Right cardiac atrium (tissue), 5 donors: ENCODE measurements at regions of chr21 and their contacts with region 1.

Region 1: DNA sequence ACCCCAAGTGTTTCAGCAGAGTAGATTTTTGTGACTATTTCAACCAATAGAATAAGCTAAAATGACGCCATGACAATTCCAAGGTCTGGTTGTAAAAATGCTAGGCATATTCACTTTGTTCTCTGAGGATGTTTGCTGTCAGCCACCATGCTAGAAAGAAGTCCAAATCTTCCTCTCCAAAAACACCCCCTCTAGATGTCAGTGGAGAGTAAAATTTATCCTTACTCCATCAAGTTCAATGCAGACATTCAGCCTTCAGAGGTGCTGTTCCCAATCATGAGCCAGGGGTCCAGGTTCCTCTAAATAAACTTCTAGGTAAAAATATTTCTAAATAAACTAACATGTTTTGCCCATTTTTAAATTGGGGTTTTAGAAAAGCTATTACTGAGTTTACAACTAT is 395.4 kb upstream of the ADAMTS5 start:
- DNase-seq: no peak
- ATAC-seq: no peak
- H3K4me3 ChIP-seq: no peak overlapping the region
- H3K27ac ChIP-seq: no peak overlapping the region
- H3K4me1 ChIP-seq: no peaks in the 10 kb centered on the region
- H3K27me3 ChIP-seq: no peaks in the 10 kb centered on the region

Region 2: GRCh38 chr21:27564684-27565301 is 202.5 kb after region 1 on chr21:
- intact Hi-C with region 1: loop called in 1 of 4 experiments (anchors 10 kb)
- DNase-seq: peak; percentile 39 to 61 (median 59)
- ATAC-seq: peak; percentile 72 to 80
- H3K4me3 ChIP-seq: no peak overlapping the region
- H3K27ac ChIP-seq: no peak overlapping the region
- H3K4me1 ChIP-seq: peaks cover under 1% of the 10 kb centered on the region
- H3K27me3 ChIP-seq: no peaks in the 10 kb centered on the region